ENCODE measurements at regions of chr12 and their contacts with region 1.

Region 1: DNA sequence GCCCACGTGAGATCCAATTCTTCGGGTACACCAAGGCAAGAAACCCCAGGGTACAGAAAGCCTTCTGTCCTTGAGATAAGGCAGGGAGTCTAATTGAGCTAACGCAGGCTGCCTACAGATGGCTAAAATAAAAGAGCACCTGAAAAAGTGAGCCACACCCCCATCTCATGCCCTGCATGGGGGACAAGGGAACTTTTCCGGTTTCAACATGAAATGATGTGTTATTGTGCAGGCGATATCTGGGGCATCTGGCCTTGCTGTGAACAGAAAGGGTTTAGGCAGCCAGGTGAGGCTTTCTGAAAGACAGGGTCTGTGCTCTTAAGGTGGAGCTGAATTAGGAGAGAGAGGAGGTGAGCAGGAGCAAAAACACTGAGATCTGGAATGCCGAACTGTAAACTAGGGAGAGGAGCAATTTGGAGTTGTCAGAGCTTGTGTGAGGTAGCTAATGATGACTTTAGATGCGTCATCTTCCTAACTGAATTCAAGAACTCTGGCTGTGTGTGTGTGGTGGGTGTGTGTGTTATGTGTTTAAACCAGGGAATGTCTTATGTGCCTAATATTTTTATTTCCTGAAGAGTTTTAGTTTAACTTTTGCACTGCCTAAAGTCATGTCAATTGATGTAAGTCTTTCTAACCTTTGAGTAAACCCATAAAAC is 20.1 kb upstream of the LDHB start:
- DNase-seq: no peak
- H3K4me3 ChIP-seq: no peak overlapping the region
- H3K27ac ChIP-seq: no peak overlapping the region
- H3K4me1 ChIP-seq: no peaks in the 10 kb centered on the region
- H3K27me3 ChIP-seq: no peaks in the 10 kb centered on the region
- CTCF ChIP-seq: no peak
- EP300 ChIP-seq: no peak
- POLR2A ChIP-seq: no peak

Region 2: DNA sequence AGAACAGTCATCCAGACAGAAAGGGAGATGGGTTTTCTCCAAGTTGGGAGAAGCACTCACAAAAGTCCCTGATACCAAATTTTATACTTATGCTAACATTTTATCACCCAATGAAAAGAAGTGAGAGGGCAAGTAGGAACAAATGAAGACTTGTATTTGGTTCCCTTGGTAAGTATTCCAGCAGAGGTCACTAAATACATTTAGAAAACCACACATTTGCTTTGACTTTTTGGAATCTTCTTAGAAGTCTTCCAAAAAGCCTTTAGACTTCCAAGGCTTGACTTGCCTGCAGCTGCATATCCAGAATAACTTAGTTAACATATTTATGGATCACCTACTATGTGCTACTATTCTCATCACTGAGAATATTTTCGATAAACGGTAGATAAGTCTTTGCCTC is 70.0 kb before region 1 on chr12:
- intact Hi-C with region 1: loop called in 3 of 4 experiments (anchors 10 kb)
- DNase-seq: no peak
- H3K4me3 ChIP-seq: no peak overlapping the region
- H3K27ac ChIP-seq: no peak overlapping the region
- H3K4me1 ChIP-seq: no peaks in the 10 kb centered on the region
- H3K27me3 ChIP-seq: no peaks in the 10 kb centered on the region
- CTCF ChIP-seq: peak in 1 of 3 donors; percentile 24
- EP300 ChIP-seq: no peak
- POLR2A ChIP-seq: no peak

Region 3: DNA sequence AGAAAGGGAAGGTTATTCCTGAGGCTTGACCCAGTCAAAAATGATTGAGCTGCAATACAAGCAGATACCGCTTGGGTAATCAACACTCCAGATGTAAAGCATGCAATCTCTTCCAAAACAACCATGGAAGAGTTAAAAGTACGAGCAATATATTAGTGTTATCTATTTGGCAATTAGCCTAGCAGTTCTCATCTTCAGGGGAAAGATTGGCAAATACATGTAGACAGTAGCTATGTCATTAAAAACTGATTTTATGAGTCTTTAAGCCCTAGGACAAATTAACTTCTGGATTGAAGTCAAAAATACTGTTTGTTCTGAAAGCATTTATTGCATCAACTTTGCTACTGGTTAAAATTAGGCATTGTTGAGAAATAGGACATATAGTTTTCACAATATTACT is 63.8 kb before region 1 on chr12:
- intact Hi-C with region 1: loop called in 3 of 4 experiments (anchors 10 kb)
- DNase-seq: no peak
- H3K4me3 ChIP-seq: no peak overlapping the region
- H3K27ac ChIP-seq: no peak overlapping the region
- H3K4me1 ChIP-seq: no peaks in the 10 kb centered on the region
- H3K27me3 ChIP-seq: no peaks in the 10 kb centered on the region
- CTCF ChIP-seq: no peak
- EP300 ChIP-seq: no peak
- POLR2A ChIP-seq: no peak

Region 4: DNA sequence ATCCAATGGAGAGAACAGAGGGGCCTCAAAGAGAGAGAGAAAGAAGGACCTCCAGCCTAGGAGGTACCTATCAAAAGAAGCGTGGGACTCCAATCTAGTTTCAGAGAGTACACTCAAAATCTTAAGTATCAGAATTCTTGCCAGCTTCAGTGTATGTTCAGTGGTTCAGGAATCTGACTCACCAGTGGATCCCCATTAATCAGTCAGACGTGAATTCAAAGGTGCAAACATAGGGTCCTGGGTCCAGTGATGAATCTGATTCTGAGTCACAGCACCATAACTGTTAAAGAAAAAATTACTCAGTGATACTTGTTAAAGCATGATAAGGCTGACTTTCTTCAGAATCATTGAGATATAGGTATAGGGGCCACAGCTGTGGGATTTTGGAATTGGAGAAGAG is 980.5 kb after region 1 on chr12:
- intact Hi-C with region 1: no loop called
- DNase-seq: no peak
- H3K4me3 ChIP-seq: no peak overlapping the region
- H3K27ac ChIP-seq: no peak overlapping the region
- H3K4me1 ChIP-seq: no peaks in the 10 kb centered on the region
- H3K27me3 ChIP-seq: no peaks in the 10 kb centered on the region
- CTCF ChIP-seq: no peak
- EP300 ChIP-seq: no peak
- POLR2A ChIP-seq: no peak

Measured in ovary (tissue), 10 donors.